ENCODE measurements at regions of chr1 and their contacts with region 1.

Region 1: DNA sequence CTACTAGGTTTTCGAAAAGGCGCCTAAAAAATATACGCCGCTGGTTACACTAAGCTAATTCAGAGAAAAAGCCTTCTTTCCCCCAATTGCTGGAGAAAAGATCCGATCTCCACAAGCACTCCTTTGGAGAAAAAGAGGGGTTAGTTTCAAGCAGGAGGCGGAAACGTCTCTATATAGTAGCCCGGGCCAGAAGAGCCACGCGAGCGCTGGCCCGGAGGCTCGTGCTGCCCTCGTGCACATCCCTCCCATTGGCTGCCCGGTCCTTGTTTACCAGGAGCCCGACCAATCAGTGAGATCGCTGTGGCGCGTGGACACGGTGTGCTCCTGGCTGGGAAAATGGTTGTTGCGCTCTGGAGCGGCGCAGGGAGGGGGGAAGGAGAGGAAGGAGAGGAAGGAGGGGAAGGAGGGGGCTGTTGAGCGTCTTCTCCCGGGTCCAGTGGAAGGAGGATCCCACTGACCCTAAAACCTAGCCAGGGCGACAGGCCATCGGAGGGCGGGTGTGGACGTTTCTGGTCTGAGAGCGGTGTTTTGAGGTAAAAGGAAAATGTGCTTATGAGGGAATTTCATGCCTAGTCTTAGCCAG is at the start of gene TXNIP:
- DNase-seq: peak; percentile 70 to 98 (median 91)
- ATAC-seq: peak; percentile 72
- H3K4me3 ChIP-seq: peak within 1 kb of the TSS; percentile 61
- H3K4me3 Mint-ChIP-seq: peak within 1 kb of the TSS; percentile 95
- H3K27ac ChIP-seq: peak within 1 kb of the TSS; percentile 91 to 92
- H3K27ac Mint-ChIP-seq: peak within 1 kb of the TSS; percentile 95
- H3K4me1 ChIP-seq: peaks cover 57% of the 10 kb centered on the region
- H3K4me1 Mint-ChIP-seq: peaks cover 71% of the 10 kb centered on the region
- H3K27me3 ChIP-seq: no peaks in the 10 kb centered on the region
- H3K27me3 Mint-ChIP-seq: no peaks in the 10 kb centered on the region
- CTCF ChIP-seq: no peak
- total RNA-seq, gene TXNIP: 1,317 to 1,358 TPM

Region 2: GRCh38 chr1:145927063-145927886 is 69.2 kb before region 1 on chr1 and contains the start of gene RBM8A:
- CTCF ChIA-PET with region 1: interaction called, 3 read pairs
- POLR2A ChIA-PET with region 1: interaction called, 63 read pairs
- intact Hi-C with region 1: loop called in 1 of 2 experiments (anchors 2 kb)
- DNase-seq: peak; percentile 87 to 99 (median 90)
- ATAC-seq: peak; percentile 96
- H3K4me3 ChIP-seq: peak within 1 kb of the TSS; percentile 95
- H3K4me3 Mint-ChIP-seq: no peak within 1 kb of the TSS
- H3K27ac ChIP-seq: peak within 1 kb of the TSS; percentile 93 to 98
- H3K27ac Mint-ChIP-seq: no peak within 1 kb of the TSS
- H3K4me1 ChIP-seq: peaks cover 37% of the 10 kb centered on the region
- H3K4me1 Mint-ChIP-seq: peaks cover 21% of the 10 kb centered on the region
- H3K27me3 ChIP-seq: no peaks in the 10 kb centered on the region
- H3K27me3 Mint-ChIP-seq: no peaks in the 10 kb centered on the region
- CTCF ChIP-seq: peak; percentile 81
- total RNA-seq, gene RBM8A: 126 to 134 TPM

Region 3: GRCh38 chr1:145978854-145979759 is 17.4 kb before region 1 on chr1:
- CTCF ChIA-PET with region 1: interaction called, 61 read pairs
- POLR2A ChIA-PET with region 1: interaction called, 625 read pairs
- intact Hi-C with region 1: loop called (anchors 1 to 2 kb)
- DNase-seq: peak in 13 of 14 experiments; percentile 45 to 97 (median 66)
- ATAC-seq: peak; percentile 69
- H3K4me3 ChIP-seq: peak overlapping the region; percentile 45
- H3K4me3 Mint-ChIP-seq: no peak overlapping the region
- H3K27ac ChIP-seq: peak overlapping the region; percentile 93 to 94
- H3K27ac Mint-ChIP-seq: no peak overlapping the region
- H3K4me1 ChIP-seq: peaks cover 69% of the 10 kb centered on the region
- H3K4me1 Mint-ChIP-seq: peaks cover 6% of the 10 kb centered on the region
- H3K27me3 ChIP-seq: no peaks in the 10 kb centered on the region
- H3K27me3 Mint-ChIP-seq: no peaks in the 10 kb centered on the region
- CTCF ChIP-seq: peak; percentile 28

Region 4: DNA sequence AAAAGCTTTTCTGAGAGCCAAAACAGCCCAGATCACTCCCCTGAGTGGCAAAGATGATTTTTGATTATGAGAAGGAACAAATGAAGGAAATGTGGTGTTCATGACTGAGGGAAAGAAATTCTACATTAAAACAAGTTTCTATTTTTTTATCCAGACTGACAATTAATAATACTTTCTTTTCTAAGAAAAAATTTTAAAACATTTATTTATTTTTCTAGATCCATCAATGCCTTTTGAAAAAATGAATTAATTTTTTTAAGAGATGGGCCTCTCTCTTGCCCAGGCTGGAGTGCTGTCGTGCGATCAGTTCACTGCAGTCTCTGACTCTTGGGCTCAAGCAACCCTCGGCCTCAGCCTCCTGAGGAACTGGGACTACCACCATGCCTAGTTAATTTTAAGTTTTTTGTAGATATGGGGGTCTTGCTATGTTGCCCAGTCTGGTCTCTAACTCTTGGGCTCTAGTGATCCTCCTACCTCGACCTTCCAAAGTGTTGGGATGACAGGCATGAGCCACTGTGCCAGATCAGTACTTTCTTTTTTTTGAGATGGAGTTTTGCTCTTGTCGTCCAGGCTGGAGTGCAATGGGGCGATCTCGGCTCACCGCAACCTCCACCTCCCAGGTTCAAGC is 11.1 kb after region 1 on chr1:
- CTCF ChIA-PET with region 1: interaction called, 21 read pairs
- POLR2A ChIA-PET with region 1: interaction called, 100 read pairs
- intact Hi-C with region 1: loop called in 1 of 2 experiments (anchors 1 kb)
- DNase-seq: no peak
- ATAC-seq: no peak
- H3K4me3 ChIP-seq: no peak overlapping the region
- H3K4me3 Mint-ChIP-seq: peak overlapping the region; percentile 86
- H3K27ac ChIP-seq: no peak overlapping the region
- H3K27ac Mint-ChIP-seq: peak overlapping the region; percentile 86
- H3K4me1 ChIP-seq: peaks cover 47% of the 10 kb centered on the region
- H3K4me1 Mint-ChIP-seq: peaks cover 46% of the 10 kb centered on the region
- H3K27me3 ChIP-seq: no peaks in the 10 kb centered on the region
- H3K27me3 Mint-ChIP-seq: no peaks in the 10 kb centered on the region
- CTCF ChIP-seq: peak; percentile 5

Region 5: DNA sequence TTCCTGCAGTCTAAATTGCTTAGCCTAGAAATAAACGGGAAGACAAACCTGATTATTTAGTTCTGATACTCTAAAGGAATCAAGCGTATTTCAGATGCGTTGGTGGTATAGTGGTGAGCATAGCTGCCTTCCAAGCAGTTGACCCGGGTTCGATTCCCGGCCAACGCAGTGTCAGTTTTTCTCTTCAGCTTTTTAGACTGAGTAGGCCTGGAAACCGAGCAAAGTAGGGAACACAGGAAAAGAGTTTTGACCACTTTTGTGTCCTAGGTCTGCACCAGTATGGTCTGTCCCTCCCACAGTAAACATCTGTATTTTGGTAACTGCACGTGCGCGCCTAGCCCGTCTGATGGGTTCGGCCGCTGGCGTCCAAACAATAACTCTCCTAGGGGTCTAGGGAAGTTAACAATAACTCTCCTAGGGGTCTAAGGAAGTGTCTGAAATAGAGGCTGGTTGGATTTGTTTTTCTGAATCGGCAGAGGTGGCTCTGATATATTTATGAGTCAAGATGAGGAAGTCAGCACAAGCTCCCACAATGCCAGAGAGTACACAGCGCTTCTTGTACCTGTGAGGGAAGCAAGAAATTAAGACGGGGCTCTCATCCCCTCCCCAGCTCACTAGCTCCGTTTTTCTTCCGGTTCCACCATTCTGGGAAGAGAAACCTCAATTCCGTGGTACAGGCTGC is 40.6 kb after region 1 on chr1:
- CTCF ChIA-PET with region 1: no interaction called
- POLR2A ChIA-PET with region 1: interaction called, 63 read pairs
- intact Hi-C with region 1: no loop called
- DNase-seq: peak; percentile 50 to 88 (median 68)
- ATAC-seq: peak; percentile 59
- H3K4me3 ChIP-seq: peak overlapping the region; percentile 83
- H3K4me3 Mint-ChIP-seq: peak overlapping the region; percentile 98
- H3K27ac ChIP-seq: peak overlapping the region; percentile 58 to 83
- H3K27ac Mint-ChIP-seq: peak overlapping the region; percentile 100
- H3K4me1 ChIP-seq: peaks cover 38% of the 10 kb centered on the region
- H3K4me1 Mint-ChIP-seq: peaks cover 45% of the 10 kb centered on the region
- H3K27me3 ChIP-seq: no peaks in the 10 kb centered on the region
- H3K27me3 Mint-ChIP-seq: peaks cover 40% of the 10 kb centered on the region
- CTCF ChIP-seq: no peak

Measured in CD4-positive, alpha-beta T cell (primary cell).